MCF 10A (cell line): ENCODE measurements at regions of chr5 and their contacts with region 1.

Region 1: GRCh38 chr5:79235634-79236363 is at the start of gene JMY:
- DNase-seq: peak; percentile 83
- H3K4me3 Mint-ChIP-seq: peak within 1 kb of the TSS; percentile 95
- H3K27ac Mint-ChIP-seq: peak within 1 kb of the TSS; percentile 98
- H3K4me1 Mint-ChIP-seq: peaks cover 5% of the 10 kb centered on the region
- H3K27me3 Mint-ChIP-seq: no peaks in the 10 kb centered on the region
- CTCF ChIP-seq: no peak
- total RNA-seq, gene JMY: 16.8 and 19.3 TPM in 2 replicates

Region 2: GRCh38 chr5:78490709-78491485 is 744.9 kb before region 1 on chr5:
- CTCF ChIA-PET with region 1: no interaction called
- POLR2A ChIA-PET with region 1: no interaction called
- intact Hi-C with region 1: no loop called
- DNase-seq: no peak
- H3K4me3 Mint-ChIP-seq: no peak overlapping the region
- H3K27ac Mint-ChIP-seq: peak overlapping the region; percentile 3
- H3K4me1 Mint-ChIP-seq: peaks cover 7% of the 10 kb centered on the region
- H3K27me3 Mint-ChIP-seq: no peaks in the 10 kb centered on the region
- CTCF ChIP-seq: no peak

Region 3: DNA sequence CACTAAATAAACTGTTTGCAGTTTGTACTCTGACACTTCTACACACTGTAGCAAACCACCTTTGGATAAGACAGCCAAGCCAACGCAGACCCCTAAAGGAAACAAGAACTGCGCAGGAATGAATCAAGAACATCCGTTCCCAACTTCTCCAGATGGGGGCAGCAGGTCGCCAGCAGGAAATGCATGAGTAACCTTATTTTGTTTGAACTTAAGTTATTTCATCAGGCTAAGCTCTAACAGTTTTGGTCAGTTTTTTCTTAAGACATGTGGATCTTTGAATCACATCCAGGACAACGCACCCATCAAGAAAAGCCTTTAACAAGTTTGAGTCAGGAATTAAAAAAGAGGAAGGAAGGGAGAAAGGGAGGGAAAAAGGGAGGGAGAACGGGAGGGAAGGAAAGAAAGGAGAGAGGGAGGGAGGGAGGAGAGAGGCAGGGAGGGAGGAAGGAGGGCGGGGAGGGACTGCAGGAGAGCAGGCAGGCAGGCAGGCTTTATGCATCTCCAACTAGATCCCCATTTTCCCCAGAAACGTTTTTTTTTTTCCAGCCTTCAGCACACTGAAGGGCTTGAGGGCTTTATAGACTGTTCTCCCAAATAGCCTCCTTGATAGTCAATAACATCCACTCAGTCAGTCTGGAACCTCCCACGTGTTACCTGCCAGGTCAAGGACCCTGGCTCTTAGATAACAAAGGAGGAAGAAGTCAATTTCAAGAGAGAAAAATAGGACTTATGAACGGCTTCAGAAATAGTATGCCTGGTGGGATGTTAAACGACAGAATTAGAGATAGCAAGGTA is 101.9 kb before region 1 on chr5:
- CTCF ChIA-PET with region 1: interaction called, 15 read pairs
- POLR2A ChIA-PET with region 1: interaction called, 25 read pairs
- intact Hi-C with region 1: loop called (anchors 1 kb)
- DNase-seq: peak; percentile 84
- H3K4me3 Mint-ChIP-seq: peak overlapping the region; percentile 63
- H3K27ac Mint-ChIP-seq: peak overlapping the region; percentile 72
- H3K4me1 Mint-ChIP-seq: peaks cover 12% of the 10 kb centered on the region
- H3K27me3 Mint-ChIP-seq: no peaks in the 10 kb centered on the region
- CTCF ChIP-seq: peak; percentile 72

Region 4: GRCh38 chr5:79318935-79319614 is 83.3 kb after region 1 on chr5:
- CTCF ChIA-PET with region 1: no interaction called
- POLR2A ChIA-PET with region 1: interaction called, 3 read pairs
- intact Hi-C with region 1: loop called (anchors 5 kb)
- DNase-seq: peak; percentile 74
- H3K4me3 Mint-ChIP-seq: no peak overlapping the region
- H3K27ac Mint-ChIP-seq: peak overlapping the region; percentile 25
- H3K4me1 Mint-ChIP-seq: peaks cover 8% of the 10 kb centered on the region
- H3K27me3 Mint-ChIP-seq: no peaks in the 10 kb centered on the region
- CTCF ChIP-seq: no peak

Region 5: DNA sequence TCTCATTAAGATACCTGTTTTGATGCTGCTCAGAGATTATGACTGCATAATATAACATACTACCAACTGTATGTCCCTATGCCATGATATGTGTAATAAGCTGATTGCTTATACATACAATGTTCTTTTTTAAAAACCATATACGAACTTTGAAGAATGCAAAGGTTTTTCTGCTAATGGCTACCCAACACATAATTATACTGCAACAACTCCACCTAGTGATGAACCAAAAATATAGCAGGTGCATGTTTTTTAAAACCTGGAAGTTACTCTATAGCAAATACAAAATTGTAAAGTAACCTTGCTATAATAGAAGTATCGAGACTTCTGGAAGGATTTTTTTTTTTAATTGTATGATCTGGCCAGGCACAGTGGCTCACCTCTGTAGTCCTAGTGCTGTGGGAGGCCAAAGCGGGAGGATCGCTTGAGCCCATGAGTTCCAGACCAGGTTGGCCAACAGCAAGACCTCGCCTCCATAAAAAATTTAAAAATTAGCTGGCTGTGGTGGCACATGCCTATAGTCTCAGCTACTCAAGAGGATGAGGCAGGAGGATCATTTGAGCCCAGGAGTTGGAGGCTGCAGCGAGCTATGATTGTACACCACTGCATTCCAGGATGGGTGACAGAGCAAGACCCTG is 229.0 kb after region 1 on chr5:
- CTCF ChIA-PET with region 1: interaction called, 7 read pairs
- POLR2A ChIA-PET with region 1: interaction called, 6 read pairs
- intact Hi-C with region 1: loop called (anchors 1 kb)
- DNase-seq: peak; percentile 31
- H3K4me3 Mint-ChIP-seq: no peak overlapping the region
- H3K27ac Mint-ChIP-seq: no peak overlapping the region
- H3K4me1 Mint-ChIP-seq: no peaks in the 10 kb centered on the region
- H3K27me3 Mint-ChIP-seq: no peaks in the 10 kb centered on the region
- CTCF ChIP-seq: peak; percentile 58